Naive thymus-derived CD4-positive, alpha-beta T cell (primary cell): ENCODE measurements at regions of chr10 and their contacts with region 1.

Region 1: GRCh38 chr10:63133056-63133820 is at the start of gene NRBF2:
- DNase-seq: peak; percentile 96 to 98 (median 98)
- ATAC-seq: peak; percentile 94
- H3K4me3 ChIP-seq: peak within 1 kb of the TSS; percentile 81
- H3K4me3 Mint-ChIP-seq: peak within 1 kb of the TSS; percentile 75 to 94 (median 92)
- H3K27ac ChIP-seq: peak within 1 kb of the TSS; percentile 98
- H3K27ac Mint-ChIP-seq: peak within 1 kb of the TSS; percentile 89 to 98 (median 96)
- H3K4me1 ChIP-seq: peaks cover 17 to 30% of the 10 kb centered on the region in 2 donors
- H3K4me1 Mint-ChIP-seq: peaks cover 10 to 49% (median 32%) of the 10 kb centered on the region in 7 donors
- H3K27me3 ChIP-seq: no peaks in the 10 kb centered on the region
- H3K27me3 Mint-ChIP-seq: no peaks in the 10 kb centered on the region
- total RNA-seq, gene NRBF2: 14.5 to 26.0 (median 19.2) TPM

Region 2: DNA sequence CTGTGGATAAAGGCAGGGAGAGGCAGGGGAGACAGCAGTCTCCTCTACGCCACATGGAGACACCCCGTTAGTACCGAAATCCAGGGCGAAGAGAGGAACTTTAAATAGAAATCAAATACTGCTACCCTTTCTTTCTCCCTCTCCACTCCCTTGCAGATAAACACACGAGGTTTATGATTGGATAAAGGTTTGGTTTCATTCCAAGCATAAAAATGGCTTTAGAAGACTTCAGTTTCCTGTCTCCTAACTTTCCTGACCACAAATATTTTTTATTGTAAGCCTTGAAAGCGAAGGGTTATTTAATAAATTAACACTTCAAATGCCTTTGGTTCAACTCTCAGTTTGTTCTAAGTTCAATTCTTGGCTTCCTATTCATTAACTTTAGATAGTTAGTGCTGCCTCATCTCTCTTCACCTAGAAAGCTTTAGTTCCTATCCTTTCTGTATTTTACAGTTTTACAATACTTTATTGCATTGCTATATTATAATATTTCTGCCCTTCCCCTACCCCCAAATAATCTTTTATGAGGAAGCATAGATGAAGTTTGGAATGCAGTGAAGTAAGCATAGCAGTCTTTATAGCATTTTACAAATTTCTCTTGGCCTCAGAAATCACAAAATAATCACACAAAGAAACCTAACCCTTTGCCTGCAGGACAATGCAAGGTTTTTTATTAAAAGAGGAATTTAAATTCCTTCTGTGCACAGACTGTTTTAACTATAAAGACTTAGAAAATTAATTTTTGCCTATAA is 1263.3 kb before region 1 on chr10:
- CTCF ChIA-PET with region 1: no interaction called
- POLR2A ChIA-PET with region 1: no interaction called
- intact Hi-C with region 1: loop called in 1 of 2 experiments (anchors 2 kb)
- DNase-seq: no peak
- ATAC-seq: no peak
- H3K4me3 ChIP-seq: no peak overlapping the region
- H3K4me3 Mint-ChIP-seq: no peak overlapping the region
- H3K27ac ChIP-seq: no peak overlapping the region
- H3K27ac Mint-ChIP-seq: no peak overlapping the region
- H3K4me1 ChIP-seq: no peaks in the 10 kb centered on the region
- H3K4me1 Mint-ChIP-seq: peaks cover 0 to 10% (median 4%) of the 10 kb centered on the region in 7 donors
- H3K27me3 ChIP-seq: peaks cover 0 to 3% of the 10 kb centered on the region in 2 donors
- H3K27me3 Mint-ChIP-seq: peaks cover 0 to 15% (median 3%) of the 10 kb centered on the region in 5 donors

Region 3: GRCh38 chr10:62528441-62528840 is 604.8 kb before region 1 on chr10:
- CTCF ChIA-PET with region 1: no interaction called
- POLR2A ChIA-PET with region 1: interaction called, 3 read pairs
- intact Hi-C with region 1: loop called in 1 of 2 experiments (anchors 1 kb)
- DNase-seq: peak in 7 of 9 donors; percentile 42 to 83 (median 78)
- ATAC-seq: peak; percentile 95
- H3K4me3 ChIP-seq: no peak overlapping the region
- H3K4me3 Mint-ChIP-seq: peak overlapping the region; percentile 0 to 78 (median 70)
- H3K27ac ChIP-seq: peak overlapping the region; percentile 44
- H3K27ac Mint-ChIP-seq: peak overlapping the region; percentile 47 to 86 (median 75)
- H3K4me1 ChIP-seq: peaks cover 24 to 39% of the 10 kb centered on the region in 2 donors
- H3K4me1 Mint-ChIP-seq: peaks cover 32 to 49% (median 43%) of the 10 kb centered on the region in 7 donors
- H3K27me3 ChIP-seq: no peaks in the 10 kb centered on the region
- H3K27me3 Mint-ChIP-seq: peaks cover 0 to 15% (median 0%) of the 10 kb centered on the region in 5 donors

Region 4: DNA sequence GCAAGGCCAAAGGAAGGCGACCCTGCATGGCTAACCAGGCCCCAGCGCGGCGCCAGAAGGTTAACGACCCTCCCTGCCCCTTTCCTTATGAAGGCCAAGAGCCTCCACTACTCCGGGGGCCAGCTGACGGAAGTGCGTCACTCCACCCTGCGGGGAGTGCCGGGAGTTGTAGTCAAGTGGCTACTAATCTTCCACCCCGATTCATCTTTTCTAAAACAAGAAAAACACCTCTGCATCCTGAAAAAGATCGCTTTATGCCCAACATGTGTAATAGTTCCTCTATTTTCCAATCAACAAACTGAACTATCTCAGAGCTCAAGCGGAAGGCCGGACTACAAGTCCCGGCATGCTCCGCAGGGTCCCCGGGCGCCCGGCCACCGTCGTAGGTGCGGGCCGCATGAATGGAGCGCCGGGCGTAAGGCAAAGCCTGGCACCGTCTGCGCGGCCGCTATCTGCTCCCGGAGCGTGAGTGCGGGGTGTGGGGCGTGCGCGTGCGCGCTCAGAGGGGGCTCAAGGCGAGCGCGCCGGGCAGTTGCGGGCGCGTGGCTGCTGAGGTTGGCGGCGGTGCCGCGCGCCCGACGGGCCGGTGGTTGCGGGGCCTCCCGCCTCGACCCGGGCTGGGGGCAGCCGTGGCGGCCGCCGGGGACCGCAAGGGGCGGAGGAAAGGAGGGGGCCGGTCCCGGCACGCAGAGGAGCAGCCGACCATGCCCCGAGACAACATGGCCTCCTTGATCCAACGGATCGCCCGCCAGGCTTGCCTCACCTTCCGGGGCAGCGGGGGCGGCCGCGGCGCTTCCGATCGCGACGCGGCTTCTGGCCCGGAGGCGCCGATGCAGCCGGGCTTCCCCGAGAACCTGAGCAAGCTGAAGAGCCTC is 328.6 kb before region 1 on chr10 and contains the start of gene ADO:
- CTCF ChIA-PET with region 1: no interaction called
- POLR2A ChIA-PET with region 1: interaction called, 4 read pairs
- intact Hi-C with region 1: loop called (anchors 1 kb)
- DNase-seq: peak; percentile 69 to 86 (median 80)
- ATAC-seq: peak; percentile 93
- H3K4me3 ChIP-seq: peak within 1 kb of the TSS; percentile 66
- H3K4me3 Mint-ChIP-seq: peak within 1 kb of the TSS; percentile 90 to 100 (median 96)
- H3K27ac ChIP-seq: peak within 1 kb of the TSS; percentile 86
- H3K27ac Mint-ChIP-seq: peak within 1 kb of the TSS; percentile 93 to 100 (median 98)
- H3K4me1 ChIP-seq: peaks cover 15 to 19% of the 10 kb centered on the region in 2 donors
- H3K4me1 Mint-ChIP-seq: peaks cover 22 to 47% (median 39%) of the 10 kb centered on the region in 7 donors
- H3K27me3 ChIP-seq: no peaks in the 10 kb centered on the region
- H3K27me3 Mint-ChIP-seq: peaks cover 0 to 20% (median 0%) of the 10 kb centered on the region in 5 donors
- total RNA-seq, gene ADO: 9.8 to 21.3 (median 15.6) TPM

Region 5: GRCh38 chr10:63003816-63004453 is 129.3 kb before region 1 on chr10:
- CTCF ChIA-PET with region 1: no interaction called
- POLR2A ChIA-PET with region 1: no interaction called
- intact Hi-C with region 1: no loop called
- DNase-seq: no peak
- ATAC-seq: no peak
- H3K4me3 ChIP-seq: no peak overlapping the region
- H3K4me3 Mint-ChIP-seq: no peak overlapping the region
- H3K27ac ChIP-seq: no peak overlapping the region
- H3K27ac Mint-ChIP-seq: no peak overlapping the region
- H3K4me1 ChIP-seq: no peaks in the 10 kb centered on the region
- H3K4me1 Mint-ChIP-seq: no peaks in the 10 kb centered on the region
- H3K27me3 ChIP-seq: no peaks in the 10 kb centered on the region
- H3K27me3 Mint-ChIP-seq: peaks cover 6 to 26% (median 16%) of the 10 kb centered on the region in 5 donors

Region 6: DNA sequence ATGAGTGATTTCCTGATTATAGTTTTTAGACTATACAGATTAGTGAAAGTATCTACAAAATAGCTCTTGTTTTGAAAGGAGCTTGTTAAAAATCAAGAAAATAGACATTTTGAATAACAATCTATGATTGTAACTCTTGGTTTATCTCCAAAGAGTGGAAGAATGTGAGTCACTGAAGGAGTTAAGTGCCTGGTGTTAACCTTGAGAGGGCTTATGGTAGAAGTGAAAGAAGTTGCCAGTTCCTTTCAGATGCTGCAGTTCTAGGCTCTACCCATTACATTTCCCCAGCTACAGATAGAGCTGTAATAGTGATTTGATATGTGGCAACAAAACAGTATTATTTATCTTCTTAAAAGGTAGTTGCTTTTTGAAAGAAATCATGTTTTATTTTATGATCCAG is 12.5 kb after region 1 on chr10:
- CTCF ChIA-PET with region 1: interaction called, 6 read pairs
- POLR2A ChIA-PET with region 1: interaction called, 7 read pairs
- intact Hi-C with region 1: loop called in 1 of 2 experiments (anchors 2 kb)
- DNase-seq: no peak
- ATAC-seq: no peak
- H3K4me3 ChIP-seq: no peak overlapping the region
- H3K4me3 Mint-ChIP-seq: peak overlapping the region in 1 of 10 donors; percentile 29
- H3K27ac ChIP-seq: no peak overlapping the region
- H3K27ac Mint-ChIP-seq: peak overlapping the region in 3 of 9 donors; percentile 36 to 57 (median 46)
- H3K4me1 ChIP-seq: no peaks in the 10 kb centered on the region
- H3K4me1 Mint-ChIP-seq: peaks cover 34 to 77% (median 71%) of the 10 kb centered on the region in 7 donors
- H3K27me3 ChIP-seq: no peaks in the 10 kb centered on the region
- H3K27me3 Mint-ChIP-seq: no peaks in the 10 kb centered on the region

Region 7: GRCh38 chr10:63166742-63167258 is 33.6 kb after region 1 on chr10:
- CTCF ChIA-PET with region 1: interaction called, 3 read pairs
- POLR2A ChIA-PET with region 1: interaction called, 5 read pairs
- intact Hi-C with region 1: loop called in 1 of 2 experiments (anchors 1 kb)
- DNase-seq: peak in 7 of 9 donors; percentile 36 to 65 (median 55)
- ATAC-seq: peak; percentile 79
- H3K4me3 ChIP-seq: no peak overlapping the region
- H3K4me3 Mint-ChIP-seq: no peak overlapping the region
- H3K27ac ChIP-seq: no peak overlapping the region
- H3K27ac Mint-ChIP-seq: peak overlapping the region in 6 of 9 donors; percentile 24 to 59 (median 46)
- H3K4me1 ChIP-seq: no peaks in the 10 kb centered on the region
- H3K4me1 Mint-ChIP-seq: peaks cover under 1 to 42% (median 2%) of the 10 kb centered on the region in 7 donors
- H3K27me3 ChIP-seq: no peaks in the 10 kb centered on the region
- H3K27me3 Mint-ChIP-seq: no peaks in the 10 kb centered on the region

Region 8: DNA sequence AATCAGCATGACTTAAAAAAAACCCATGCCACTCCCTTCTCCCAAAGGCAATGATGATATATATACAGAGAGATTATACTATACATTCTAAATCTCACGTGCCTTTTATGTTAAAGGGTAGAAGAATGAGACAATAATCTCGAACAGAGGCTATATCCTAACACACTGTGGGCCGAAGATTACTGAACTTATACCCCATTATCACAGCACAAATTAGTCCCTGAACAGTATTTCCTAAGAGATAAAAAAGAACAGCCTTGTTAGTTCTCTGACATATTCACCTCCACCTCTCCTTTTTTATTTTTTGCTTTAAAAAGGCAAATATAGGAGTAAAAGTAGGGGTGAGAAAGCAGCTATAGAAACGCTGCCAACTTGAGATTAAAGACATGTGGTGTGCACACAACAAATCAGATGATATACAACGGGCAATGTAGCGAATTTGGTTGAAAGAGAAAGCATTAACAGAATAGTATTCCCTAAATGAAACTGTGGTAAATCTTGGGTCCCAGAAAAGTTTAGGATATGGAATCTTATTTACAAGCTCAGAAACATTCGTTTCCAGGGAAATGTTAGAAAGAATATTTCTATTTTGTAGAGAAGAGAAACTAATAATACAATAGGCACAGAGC is 263.0 kb after region 1 on chr10:
- CTCF ChIA-PET with region 1: no interaction called
- POLR2A ChIA-PET with region 1: no interaction called
- intact Hi-C with region 1: no loop called
- DNase-seq: no peak
- ATAC-seq: no peak
- H3K4me3 ChIP-seq: no peak overlapping the region
- H3K4me3 Mint-ChIP-seq: no peak overlapping the region
- H3K27ac ChIP-seq: no peak overlapping the region
- H3K27ac Mint-ChIP-seq: peak overlapping the region in 2 of 9 donors; percentile 66 to 73
- H3K4me1 ChIP-seq: no peaks in the 10 kb centered on the region
- H3K4me1 Mint-ChIP-seq: peaks cover 11 to 41% (median 21%) of the 10 kb centered on the region in 7 donors
- H3K27me3 ChIP-seq: no peaks in the 10 kb centered on the region
- H3K27me3 Mint-ChIP-seq: no peaks in the 10 kb centered on the region

Region 9: GRCh38 chr10:63421591-63421990 is 288.4 kb after region 1 on chr10:
- CTCF ChIA-PET with region 1: no interaction called
- POLR2A ChIA-PET with region 1: no interaction called
- intact Hi-C with region 1: no loop called
- DNase-seq: peak in 7 of 9 donors; percentile 35 to 71 (median 53)
- ATAC-seq: peak; percentile 95
- H3K4me3 ChIP-seq: no peak overlapping the region
- H3K4me3 Mint-ChIP-seq: peak overlapping the region in 9 of 10 donors; percentile 49 to 73 (median 68)
- H3K27ac ChIP-seq: peak overlapping the region; percentile 36
- H3K27ac Mint-ChIP-seq: peak overlapping the region; percentile 37 to 97 (median 91)
- H3K4me1 ChIP-seq: peaks cover 0 to 15% of the 10 kb centered on the region in 2 donors
- H3K4me1 Mint-ChIP-seq: peaks cover 16 to 61% (median 49%) of the 10 kb centered on the region in 7 donors
- H3K27me3 ChIP-seq: no peaks in the 10 kb centered on the region
- H3K27me3 Mint-ChIP-seq: no peaks in the 10 kb centered on the region

Region 10: DNA sequence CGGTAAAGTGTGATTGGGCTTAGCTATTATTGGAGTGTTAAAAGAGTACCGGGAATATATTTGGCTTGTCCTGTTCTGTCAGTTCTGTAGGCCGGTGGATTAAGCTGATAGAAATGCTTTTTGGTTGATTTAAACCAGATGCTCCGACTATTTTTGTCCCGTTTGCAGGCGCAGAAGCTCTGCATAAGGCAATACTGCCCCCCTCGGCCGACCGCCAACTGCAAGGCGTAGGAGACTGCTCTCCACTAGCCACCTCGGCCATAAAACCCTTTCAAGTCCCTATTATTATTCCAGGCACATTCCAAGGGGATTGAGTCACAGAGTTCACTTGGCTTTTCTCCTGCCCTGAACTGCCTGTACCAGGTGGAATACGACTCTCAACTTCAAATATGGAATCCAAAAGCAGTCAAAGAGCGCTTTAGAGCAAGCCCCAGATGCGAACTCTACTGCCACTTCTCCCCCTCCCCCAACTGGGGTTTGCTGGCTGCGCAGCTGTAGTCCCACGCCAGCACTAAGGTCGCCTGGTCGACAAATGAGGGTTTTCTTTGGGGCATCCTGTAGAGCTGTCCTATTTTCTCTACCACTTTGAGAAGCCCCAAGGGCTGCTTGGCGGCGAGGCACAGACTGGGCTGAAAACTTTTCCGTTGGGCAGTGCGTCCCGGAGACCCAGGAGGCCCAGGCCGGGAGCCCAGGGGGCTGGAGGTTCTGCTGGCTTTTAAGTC is 496.3 kb after region 1 on chr10:
- CTCF ChIA-PET with region 1: no interaction called
- POLR2A ChIA-PET with region 1: interaction called, 12 read pairs
- intact Hi-C with region 1: loop called (anchors 1 kb)
- DNase-seq: peak; percentile 61 to 81 (median 78)
- ATAC-seq: peak; percentile 81
- H3K4me3 ChIP-seq: peak overlapping the region; percentile 90
- H3K4me3 Mint-ChIP-seq: peak overlapping the region; percentile 87 to 98 (median 95)
- H3K27ac ChIP-seq: peak overlapping the region; percentile 69
- H3K27ac Mint-ChIP-seq: peak overlapping the region; percentile 79 to 95 (median 90)
- H3K4me1 ChIP-seq: peaks cover 0 to 17% of the 10 kb centered on the region in 2 donors
- H3K4me1 Mint-ChIP-seq: peaks cover 19 to 40% (median 26%) of the 10 kb centered on the region in 7 donors
- H3K27me3 ChIP-seq: no peaks in the 10 kb centered on the region
- H3K27me3 Mint-ChIP-seq: peaks cover 0 to 3% (median 0%) of the 10 kb centered on the region in 5 donors